ENCODE measurements at regions of chr2 and their contacts with region 1.

Region 1: GRCh38 chr2:197499594-197500526 is at the starts of genes HSPD1 and HSPE1:
- DNase-seq: peak; percentile 99
- ATAC-seq: peak; percentile 86
- H3K4me3 Mint-ChIP-seq: peak within 1 kb of the TSS; percentile 98
- H3K27ac Mint-ChIP-seq: peak within 1 kb of the TSS; percentile 98
- H3K4me1 Mint-ChIP-seq: peaks cover 52% of the 10 kb centered on the region
- H3K27me3 Mint-ChIP-seq: no peaks in the 10 kb centered on the region
- total RNA-seq, gene HSPD1: 322 to 336 TPM
- total RNA-seq, gene HSPE1: 153 to 162 TPM

Region 2: GRCh38 chr2:197453161-197453914 is 46.5 kb before region 1 on chr2 and contains the start of gene COQ10B:
- CTCF ChIA-PET with region 1: no interaction called
- POLR2A ChIA-PET with region 1: interaction called, 34 read pairs
- DNase-seq: peak; percentile 99
- ATAC-seq: peak; percentile 95
- H3K4me3 Mint-ChIP-seq: peak within 1 kb of the TSS; percentile 96
- H3K27ac Mint-ChIP-seq: peak within 1 kb of the TSS; percentile 100
- H3K4me1 Mint-ChIP-seq: peaks cover 38% of the 10 kb centered on the region
- H3K27me3 Mint-ChIP-seq: no peaks in the 10 kb centered on the region
- total RNA-seq, gene COQ10B: 22.5 to 22.6 TPM

Region 3: GRCh38 chr2:197515739-197516392 is 16.0 kb after region 1 on chr2 and contains the start of gene MOB4:
- CTCF ChIA-PET with region 1: interaction called, 15 read pairs
- POLR2A ChIA-PET with region 1: interaction called, 134 read pairs
- DNase-seq: peak; percentile 95
- ATAC-seq: peak; percentile 92
- H3K4me3 Mint-ChIP-seq: peak within 1 kb of the TSS; percentile 91
- H3K27ac Mint-ChIP-seq: peak within 1 kb of the TSS; percentile 91
- H3K4me1 Mint-ChIP-seq: peaks cover 34% of the 10 kb centered on the region
- H3K27me3 Mint-ChIP-seq: no peaks in the 10 kb centered on the region
- total RNA-seq, gene MOB4: 16.5 to 21.3 TPM